Posterior vena cava (tissue), 2 donors: ENCODE measurements at regions of chr15 and their contacts with region 1.

Region 1: GRCh38 chr15:71743861-71744382 is 66.4 kb upstream of the NR2E3 start:
- DNase-seq: no peak

Region 2: GRCh38 chr15:70617076-70617910 is 1126.6 kb before region 1 on chr15:
- intact Hi-C with region 1: no loop called
- DNase-seq: no peak

Region 3: DNA sequence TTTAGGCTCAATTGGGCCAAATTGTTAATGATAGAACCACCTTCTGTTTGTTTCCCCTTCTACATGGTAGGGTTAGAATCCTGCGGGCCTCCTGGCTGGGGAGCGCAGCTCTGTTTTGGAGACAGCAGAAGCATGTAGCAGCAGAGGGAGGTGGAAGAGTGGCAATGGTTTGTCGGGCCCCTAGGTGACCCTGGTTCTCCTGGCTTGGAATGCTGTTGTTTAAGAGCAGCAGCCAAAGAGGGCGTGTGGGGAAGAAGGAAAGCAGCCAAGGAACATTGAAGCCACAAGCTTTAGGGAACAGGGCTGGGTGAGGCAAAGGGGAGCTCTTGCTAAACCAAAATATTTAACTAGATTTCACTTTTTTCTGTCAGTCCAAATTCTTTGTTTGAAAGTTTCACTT is 147.2 kb before region 1 on chr15:
- intact Hi-C with region 1: no loop called
- DNase-seq: no peak

Region 4: GRCh38 chr15:71701808-71702207 is 42.1 kb before region 1 on chr15:
- intact Hi-C with region 1: loop called in 1 of 2 experiments (anchors 2 kb)
- DNase-seq: no peak

Region 5: GRCh38 chr15:71800835-71801745 is 57.2 kb after region 1 on chr15:
- intact Hi-C with region 1: loop called in 1 of 2 experiments (anchors 10 kb)
- DNase-seq: no peak

Region 6: GRCh38 chr15:72155635-72156616 is 412.0 kb after region 1 on chr15:
- intact Hi-C with region 1: loop called (anchors 10 kb)
- DNase-seq: peak; percentile 95